ENCODE measurements at regions of chr18 and their contacts with region 1.

Region 1: DNA sequence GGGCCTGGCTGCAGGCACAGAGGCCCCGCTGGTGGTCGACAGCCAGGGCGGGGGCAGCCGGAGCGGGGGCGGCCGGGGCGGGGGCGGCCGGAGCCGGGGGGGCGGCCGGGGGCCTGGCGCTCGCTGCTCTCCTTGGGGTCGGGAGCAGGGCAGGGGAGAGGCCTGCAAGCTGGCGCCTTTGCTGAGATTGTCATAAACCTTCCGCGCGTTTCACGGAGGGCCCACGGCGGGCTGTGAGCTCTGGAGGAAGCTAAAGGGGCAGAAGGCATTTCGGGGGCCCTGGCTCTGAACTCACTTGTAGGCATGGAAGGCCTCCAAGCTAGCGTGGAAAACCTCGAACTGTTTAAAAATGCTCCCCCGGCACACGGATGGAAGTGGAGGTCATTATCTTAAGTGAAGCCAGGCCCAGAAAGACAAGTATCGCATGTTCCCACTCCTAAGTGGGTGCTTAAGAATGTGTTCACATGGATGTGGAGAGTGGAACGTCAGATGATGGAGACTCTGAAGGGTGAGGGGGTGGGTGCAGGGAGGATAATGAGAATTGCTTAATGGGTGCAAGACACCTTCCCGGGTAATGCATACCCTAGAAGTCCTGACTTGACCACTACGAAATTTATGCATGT is 629 bp downstream of the PRELID3A start:
- DNase-seq: peak; percentile 47
- ATAC-seq: no peak
- H3K4me3 ChIP-seq: peak overlapping the region in 4 of 5 experiments; percentile 49 to 74 (median 60)
- H3K4me3 Mint-ChIP-seq: peak overlapping the region; percentile 90
- H3K27ac ChIP-seq: no peak overlapping the region
- H3K27ac Mint-ChIP-seq: peak overlapping the region; percentile 65
- H3K4me1 ChIP-seq: peaks cover 9 to 18% of the 10 kb centered on the region in 2 donors
- H3K4me1 Mint-ChIP-seq: peaks cover 18% of the 10 kb centered on the region
- H3K27me3 ChIP-seq: peaks cover 0 to 25% (median 0%) of the 10 kb centered on the region in 4 experiments
- H3K27me3 Mint-ChIP-seq: peaks cover 14% of the 10 kb centered on the region
- CTCF ChIP-seq: no peak

Region 2: DNA sequence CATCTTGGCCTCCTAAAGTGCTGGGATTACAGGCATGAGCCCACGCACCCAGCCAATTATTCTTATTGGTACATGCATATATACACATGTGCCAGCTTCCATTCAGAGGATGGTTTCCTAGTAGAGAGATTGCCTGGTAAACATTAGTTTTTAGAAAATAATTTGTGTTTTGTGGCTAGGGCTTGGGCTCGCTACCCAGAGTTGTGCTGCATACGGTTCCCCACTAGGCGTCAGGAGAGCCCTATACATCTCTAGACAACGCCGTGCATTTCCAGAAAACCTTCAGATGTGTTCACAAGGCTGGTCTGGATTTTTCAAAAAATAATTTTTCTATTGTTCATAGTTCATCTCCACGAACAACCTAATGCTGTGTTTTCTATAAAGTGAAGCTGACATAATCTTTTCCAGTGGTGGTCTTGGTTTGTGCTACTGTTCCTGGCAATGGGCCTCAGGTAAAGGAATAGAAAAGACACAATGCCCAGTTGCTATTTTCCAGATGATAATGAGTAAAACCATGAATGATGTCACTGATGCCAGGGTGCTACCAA is 16.7 kb before region 1 on chr18:
- CTCF ChIA-PET with region 1: interaction called, 10 read pairs
- POLR2A ChIA-PET with region 1: interaction called, 3 read pairs
- intact Hi-C with region 1: loop called (anchors 2 kb)
- DNase-seq: peak; percentile 68
- ATAC-seq: peak; percentile 94
- H3K4me3 ChIP-seq: no peak overlapping the region
- H3K4me3 Mint-ChIP-seq: no peak overlapping the region
- H3K27ac ChIP-seq: no peak overlapping the region
- H3K27ac Mint-ChIP-seq: no peak overlapping the region
- H3K4me1 ChIP-seq: no peaks in the 10 kb centered on the region
- H3K4me1 Mint-ChIP-seq: no peaks in the 10 kb centered on the region
- H3K27me3 ChIP-seq: peaks cover 0 to 7% (median 0%) of the 10 kb centered on the region in 4 experiments
- H3K27me3 Mint-ChIP-seq: peaks cover 9% of the 10 kb centered on the region
- CTCF ChIP-seq: peak; percentile 84

Region 3: GRCh38 chr18:12657684-12658425 is 249.5 kb after region 1 on chr18 and contains the start of gene SPIRE1:
- CTCF ChIA-PET with region 1: interaction called, 3 read pairs
- POLR2A ChIA-PET with region 1: no interaction called
- intact Hi-C with region 1: loop called (anchors 1 kb)
- DNase-seq: peak; percentile 71
- ATAC-seq: peak; percentile 77
- H3K4me3 ChIP-seq: peak within 1 kb of the TSS in 4 of 5 experiments; percentile 32 to 67 (median 58)
- H3K4me3 Mint-ChIP-seq: peak within 1 kb of the TSS; percentile 94
- H3K27ac ChIP-seq: no peak within 1 kb of the TSS
- H3K27ac Mint-ChIP-seq: no peak within 1 kb of the TSS
- H3K4me1 ChIP-seq: peaks cover 9 to 11% of the 10 kb centered on the region in 2 donors
- H3K4me1 Mint-ChIP-seq: peaks cover 11% of the 10 kb centered on the region
- H3K27me3 ChIP-seq: peaks cover 0 to 34% (median 5%) of the 10 kb centered on the region in 4 experiments
- H3K27me3 Mint-ChIP-seq: peaks cover 26% of the 10 kb centered on the region
- CTCF ChIP-seq: no peak
- total RNA-seq, gene SPIRE1: 3.0 and 4.0 TPM in 2 replicates

Region 4: GRCh38 chr18:12726774-12727550 is 318.6 kb after region 1 on chr18:
- CTCF ChIA-PET with region 1: no interaction called
- POLR2A ChIA-PET with region 1: no interaction called
- intact Hi-C with region 1: no loop called
- DNase-seq: peak; percentile 77
- ATAC-seq: peak; percentile 61
- H3K4me3 ChIP-seq: no peak overlapping the region
- H3K4me3 Mint-ChIP-seq: no peak overlapping the region
- H3K27ac ChIP-seq: no peak overlapping the region
- H3K27ac Mint-ChIP-seq: no peak overlapping the region
- H3K4me1 ChIP-seq: no peaks in the 10 kb centered on the region
- H3K4me1 Mint-ChIP-seq: no peaks in the 10 kb centered on the region
- H3K27me3 ChIP-seq: no peaks in the 10 kb centered on the region
- H3K27me3 Mint-ChIP-seq: no peaks in the 10 kb centered on the region
- CTCF ChIP-seq: peak; percentile 93

Region 5: GRCh38 chr18:12947355-12948041 is 539.1 kb after region 1 on chr18 and contains the start of gene SEH1L:
- CTCF ChIA-PET with region 1: no interaction called
- POLR2A ChIA-PET with region 1: interaction called, 4 read pairs
- intact Hi-C with region 1: loop called (anchors 1 kb)
- DNase-seq: no peak
- ATAC-seq: peak; percentile 91
- H3K4me3 ChIP-seq: peak within 1 kb of the TSS; percentile 69 to 97 (median 75)
- H3K4me3 Mint-ChIP-seq: peak within 1 kb of the TSS; percentile 96
- H3K27ac ChIP-seq: peak within 1 kb of the TSS; percentile 88 to 89
- H3K27ac Mint-ChIP-seq: peak within 1 kb of the TSS; percentile 94
- H3K4me1 ChIP-seq: peaks cover 5 to 22% of the 10 kb centered on the region in 2 donors
- H3K4me1 Mint-ChIP-seq: peaks cover 29% of the 10 kb centered on the region
- H3K27me3 ChIP-seq: no peaks in the 10 kb centered on the region
- H3K27me3 Mint-ChIP-seq: no peaks in the 10 kb centered on the region
- CTCF ChIP-seq: no peak
- total RNA-seq, gene SEH1L: 46.4 and 48.1 TPM in 2 replicates